ENCODE measurements at regions of chr7 and their contacts with region 1.

Region 1: DNA sequence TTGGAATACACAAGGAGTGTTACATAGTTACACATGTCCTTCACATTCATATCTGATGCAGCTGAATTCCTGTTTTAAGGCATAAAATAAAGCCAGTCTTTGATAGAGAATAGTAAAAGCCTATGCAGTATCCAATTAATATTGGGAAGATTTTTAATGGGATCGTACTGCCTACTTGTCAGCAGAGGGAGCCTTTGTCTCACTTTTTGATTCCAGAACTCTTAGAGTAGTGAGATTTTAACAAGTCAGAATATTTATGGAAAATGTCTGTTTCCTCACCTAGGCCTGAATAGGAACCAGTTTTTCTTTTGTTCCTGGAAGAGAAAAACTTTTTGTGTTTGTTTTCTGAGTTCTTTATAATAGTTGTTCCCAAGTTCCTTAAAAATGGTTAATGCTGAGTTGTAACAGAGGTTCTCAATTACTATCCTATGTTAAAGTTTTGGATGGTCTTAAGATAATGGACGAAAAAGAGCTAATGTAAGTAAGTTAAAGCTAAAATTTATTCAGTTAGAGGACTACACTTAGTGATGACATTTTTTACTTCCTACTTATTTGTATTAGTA is 114.0 kb downstream of the BBS9 start:
- DNase-seq: peak; percentile 77
- H3K4me3 ChIP-seq: no peak overlapping the region
- H3K27ac ChIP-seq: no peak overlapping the region
- H3K4me1 ChIP-seq: peaks cover 4% of the 10 kb centered on the region; the same call in 1 of the 2 replicates
- H3K27me3 ChIP-seq: no peaks in the 10 kb centered on the region

Region 2: DNA sequence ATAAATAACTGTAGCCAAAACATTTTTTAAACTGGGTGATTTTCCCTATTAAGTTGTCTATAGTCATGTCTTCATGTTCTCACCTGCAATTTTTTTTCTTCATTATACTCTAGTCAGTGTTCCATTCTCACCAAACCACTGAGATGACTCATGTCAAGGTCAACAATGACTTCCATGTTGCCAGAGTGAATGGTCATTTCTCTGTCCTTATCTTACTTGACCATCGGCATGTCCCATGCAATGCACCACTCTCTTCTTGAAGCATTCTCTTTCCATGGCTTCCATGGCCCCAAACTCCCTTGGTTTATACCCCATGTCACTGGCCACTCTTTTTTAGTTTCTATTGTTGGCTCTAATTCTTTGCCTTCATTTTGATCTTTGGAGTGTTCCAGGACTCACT is 1382.5 kb before region 1 on chr7:
- in situ Hi-C with region 1: no loop called
- DNase-seq: no peak
- H3K4me3 ChIP-seq: no peak overlapping the region
- H3K27ac ChIP-seq: no peak overlapping the region
- H3K4me1 ChIP-seq: no peaks in the 10 kb centered on the region
- H3K27me3 ChIP-seq: no peaks in the 10 kb centered on the region

Region 3: GRCh38 chr7:33185786-33186185 is 57.6 kb before region 1 on chr7:
- in situ Hi-C with region 1: no loop called
- DNase-seq: peak; percentile 65
- H3K4me3 ChIP-seq: no peak overlapping the region
- H3K27ac ChIP-seq: 0 out of 2 replicates have a peak overlapping the region, but pooled peaks have one; percentile 10
- H3K4me1 ChIP-seq: peaks cover 9% of the 10 kb centered on the region
- H3K27me3 ChIP-seq: no peaks in the 10 kb centered on the region

Region 4: DNA sequence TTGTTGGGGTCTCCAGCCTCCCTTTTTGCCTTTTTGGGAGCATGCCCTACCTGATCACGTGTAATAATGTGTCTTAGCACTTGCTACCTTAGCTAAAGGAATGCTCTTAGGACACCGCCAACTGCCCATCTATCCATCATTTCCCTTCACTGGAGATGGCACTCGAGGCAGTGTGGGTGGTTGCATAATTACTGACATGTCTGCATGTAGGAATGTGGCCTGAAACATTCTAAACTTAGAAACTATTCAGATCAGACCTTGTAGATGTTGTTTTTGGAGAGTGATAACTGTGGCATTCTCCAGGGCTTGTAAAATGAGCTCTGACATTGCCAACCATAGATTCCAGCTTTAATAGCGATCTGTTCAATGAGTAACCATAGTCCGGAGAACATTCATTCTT is 251.8 kb after region 1 on chr7:
- in situ Hi-C with region 1: no loop called
- DNase-seq: peak; percentile 74
- H3K4me3 ChIP-seq: no peak overlapping the region
- H3K27ac ChIP-seq: peak overlapping the region; percentile 6
- H3K4me1 ChIP-seq: peaks cover 36% of the 10 kb centered on the region
- H3K27me3 ChIP-seq: no peaks in the 10 kb centered on the region

Region 5: DNA sequence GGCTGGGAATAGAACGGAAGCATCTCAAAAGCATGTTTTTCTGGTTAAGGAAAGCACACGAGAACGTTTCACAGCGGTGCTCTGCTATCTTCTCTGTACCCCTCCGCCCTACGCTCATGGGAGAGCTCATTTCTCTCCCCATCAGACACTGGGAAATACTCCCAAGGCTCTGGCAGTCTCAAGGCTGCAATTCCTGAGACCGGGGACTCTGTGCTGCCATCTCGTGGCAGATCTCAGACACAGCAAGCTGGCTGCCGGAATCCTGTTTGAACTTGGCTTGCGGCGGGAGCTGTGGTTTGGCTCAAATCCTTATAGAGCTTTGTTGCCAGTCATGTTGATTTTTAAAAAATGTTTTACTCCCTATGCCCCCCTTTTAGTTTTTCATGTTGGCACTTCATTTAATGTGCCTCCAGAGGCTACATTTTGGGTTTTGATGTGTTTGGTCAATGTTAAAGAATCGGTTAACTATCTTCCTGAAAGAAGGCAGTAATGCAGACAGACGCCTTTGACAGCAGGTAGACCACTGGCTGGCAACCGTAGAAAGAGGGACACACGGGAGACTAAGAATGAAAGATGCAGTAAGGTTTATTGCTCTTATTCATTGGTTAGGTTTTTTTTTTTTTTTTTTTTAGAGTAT is 689.5 kb after region 1 on chr7:
- in situ Hi-C with region 1: loop called (anchors 25 kb)
- DNase-seq: peak; percentile 90
- H3K4me3 ChIP-seq: peak overlapping the region; percentile 46
- H3K27ac ChIP-seq: peak overlapping the region; percentile 96
- H3K4me1 ChIP-seq: peaks cover 34% of the 10 kb centered on the region
- H3K27me3 ChIP-seq: no peaks in the 10 kb centered on the region

Measured in GM23248 (cell line).